Activated CD4-positive, alpha-beta T cell treated with anti-CD3 and anti-CD28 coated beads for 36 hours (primary cell): ENCODE measurements at regions of chr1 and their contacts with region 1.

Region 1: GRCh38 chr1:248825909-248826760 is at the start of gene SH3BP5L:
- DNase-seq: peak; percentile 95
- ATAC-seq: peak; percentile 92
- H3K4me3 Mint-ChIP-seq: peak within 1 kb of the TSS; percentile 85
- H3K27ac Mint-ChIP-seq: peak within 1 kb of the TSS; percentile 99
- H3K4me1 Mint-ChIP-seq: peaks cover 53% of the 10 kb centered on the region
- H3K27me3 Mint-ChIP-seq: no peaks in the 10 kb centered on the region
- total RNA-seq, gene SH3BP5L: 20.1 to 21.3 TPM

Region 2: GRCh38 chr1:248858891-248859889 is 33.1 kb after region 1 on chr1 and contains the start of gene ZNF692:
- CTCF ChIA-PET with region 1: interaction called, 9 read pairs
- POLR2A ChIA-PET with region 1: interaction called, 10 read pairs
- intact Hi-C with region 1: loop called (anchors 1 kb)
- DNase-seq: peak; percentile 99
- ATAC-seq: peak; percentile 86
- H3K4me3 Mint-ChIP-seq: peak within 1 kb of the TSS; percentile 89
- H3K27ac Mint-ChIP-seq: peak within 1 kb of the TSS; percentile 99
- H3K4me1 Mint-ChIP-seq: peaks cover 55% of the 10 kb centered on the region
- H3K27me3 Mint-ChIP-seq: no peaks in the 10 kb centered on the region
- total RNA-seq, gene ZNF692: 75.9 to 92.3 TPM

Region 3: GRCh38 chr1:248873409-248873992 is 47.4 kb after region 1 on chr1:
- CTCF ChIA-PET with region 1: interaction called, 4 read pairs
- POLR2A ChIA-PET with region 1: interaction called, 7 read pairs
- intact Hi-C with region 1: loop called (anchors 1 kb)
- DNase-seq: peak; percentile 95
- ATAC-seq: peak; percentile 83
- H3K4me3 Mint-ChIP-seq: peak overlapping the region; percentile 87
- H3K27ac Mint-ChIP-seq: peak overlapping the region; percentile 94
- H3K4me1 Mint-ChIP-seq: peaks cover 25% of the 10 kb centered on the region
- H3K27me3 Mint-ChIP-seq: no peaks in the 10 kb centered on the region